Heart right ventricle (tissue), 16 donors: ENCODE measurements at regions of chr16 and their contacts with region 1.

Region 1: DNA sequence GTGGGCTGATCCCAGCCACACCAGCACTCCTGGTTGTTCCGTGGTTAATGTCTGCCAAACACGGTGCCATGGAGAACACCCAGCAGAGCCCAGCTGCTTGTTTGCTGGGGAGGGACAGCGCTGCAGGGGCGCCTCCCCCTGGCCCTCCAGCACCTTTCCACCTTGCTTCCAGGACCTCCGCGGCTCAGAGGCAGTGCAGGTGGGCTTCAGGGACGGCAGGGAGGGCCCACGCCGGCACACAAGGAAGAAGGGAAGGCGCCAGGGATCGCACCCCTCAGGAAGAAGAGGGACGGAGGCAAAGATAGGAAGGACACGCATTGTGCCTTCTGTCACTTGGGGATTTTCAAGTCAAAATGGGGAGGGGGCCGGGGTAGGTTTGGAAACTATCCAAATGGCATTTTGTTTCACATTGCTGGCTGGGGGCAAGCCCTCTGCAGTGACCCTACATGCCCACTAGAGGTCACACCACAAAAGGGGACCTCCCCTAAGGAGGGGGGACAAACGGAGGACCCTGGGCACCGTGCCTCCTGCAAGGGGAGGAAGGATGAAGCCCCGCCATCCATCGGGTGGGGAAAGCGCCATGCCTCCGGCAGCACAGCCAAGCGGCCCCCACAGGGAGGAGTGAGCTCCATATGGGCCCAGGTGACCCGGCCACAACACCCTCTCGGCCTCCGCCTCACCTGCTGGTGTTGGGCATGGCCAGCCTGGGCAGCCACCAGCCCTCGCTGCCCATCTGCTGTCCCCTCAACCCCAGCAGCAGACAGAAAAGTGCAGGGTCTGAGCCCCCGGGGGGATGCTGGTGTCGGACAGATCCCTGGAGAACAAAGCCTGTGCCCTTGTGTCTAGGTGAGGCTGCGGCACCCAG is 7.5 kb upstream of the C16orf95 start:
- DNase-seq: peak in 1 of 2 donors; percentile 38
- ATAC-seq: peak; percentile 48 to 75 (median 60)
- H3K4me3 ChIP-seq: no peak overlapping the region
- H3K27ac ChIP-seq: no peak overlapping the region
- H3K4me1 ChIP-seq: peaks cover 0 to 21% (median 5%) of the 10 kb centered on the region in 9 donors
- H3K27me3 ChIP-seq: no peaks in the 10 kb centered on the region
- CTCF ChIP-seq: peak; percentile 75 to 92 (median 81)

Region 2: GRCh38 chr16:87368029-87368770 is 43.6 kb after region 1 on chr16:
- intact Hi-C with region 1: loop called in 1 of 10 experiments (anchors 5 kb)
- DNase-seq: no peak
- ATAC-seq: peak in 3 of 8 donors; percentile 31 to 61 (median 46)
- H3K4me3 ChIP-seq: no peak overlapping the region
- H3K27ac ChIP-seq: peak overlapping the region in 8 of 10 donors; percentile 4 to 56 (median 43)
- H3K4me1 ChIP-seq: peaks cover 18 to 82% (median 68%) of the 10 kb centered on the region in 9 donors
- H3K27me3 ChIP-seq: peaks cover 0 to 70% (median 0%) of the 10 kb centered on the region in 7 donors
- CTCF ChIP-seq: no peak

Region 3: GRCh38 chr16:87380859-87381258 is 56.2 kb after region 1 on chr16:
- intact Hi-C with region 1: loop called in 9 of 10 experiments (anchors 2 to 5 kb)
- DNase-seq: no peak
- ATAC-seq: no peak
- H3K4me3 ChIP-seq: peak overlapping the region in 7 of 10 donors; percentile 61 to 81 (median 68)
- H3K27ac ChIP-seq: peak overlapping the region in 9 of 10 donors; percentile 42 to 92 (median 83)
- H3K4me1 ChIP-seq: peaks cover 7 to 72% (median 56%) of the 10 kb centered on the region in 9 donors
- H3K27me3 ChIP-seq: no peaks in the 10 kb centered on the region
- CTCF ChIP-seq: no peak

Region 4: DNA sequence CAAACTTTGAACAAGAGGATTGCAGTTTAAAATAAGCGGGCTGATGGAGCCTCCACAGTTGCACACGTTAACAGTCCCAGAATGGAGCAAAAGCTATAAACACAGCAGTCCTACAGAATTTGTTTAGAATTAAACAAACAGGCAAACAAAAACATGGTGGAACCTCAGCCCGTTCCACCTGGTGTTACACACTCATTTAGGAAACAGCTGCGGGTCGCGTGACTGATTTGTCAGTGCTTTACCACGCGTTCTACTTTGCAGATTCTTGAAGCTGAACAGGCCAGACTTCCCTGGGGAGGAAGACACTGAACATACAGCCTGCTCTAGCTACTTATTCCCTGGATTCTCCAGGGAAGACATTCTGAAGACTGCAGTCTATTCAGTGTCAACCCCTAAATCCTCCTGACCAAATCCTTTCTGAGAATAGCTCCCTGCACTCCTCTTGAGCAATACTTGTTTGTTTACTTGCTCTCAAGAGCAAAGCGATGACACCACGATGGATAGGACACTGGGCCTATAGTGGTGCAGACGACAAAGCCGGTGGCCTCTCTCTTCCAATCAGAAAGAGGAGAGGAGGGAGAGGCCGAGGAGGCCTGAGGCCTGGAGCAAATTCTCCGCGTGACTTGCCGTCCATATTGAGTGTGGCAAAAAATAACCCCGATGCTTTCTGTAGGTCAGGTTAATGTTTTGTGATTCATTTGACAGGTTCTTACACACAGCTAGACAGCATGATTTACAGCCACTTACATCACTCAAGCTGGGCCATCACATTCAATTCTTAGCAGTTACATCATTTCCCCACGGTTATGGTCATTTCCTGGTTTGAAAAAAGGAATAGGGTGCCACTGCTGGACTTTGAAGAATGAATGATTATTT is 63.5 kb after region 1 on chr16:
- intact Hi-C with region 1: loop called in 9 of 10 experiments (anchors 5 kb)
- DNase-seq: peak; percentile 82 to 97
- ATAC-seq: peak; percentile 59 to 85 (median 74)
- H3K4me3 ChIP-seq: peak overlapping the region in 7 of 10 donors; percentile 23 to 41 (median 29)
- H3K27ac ChIP-seq: peak overlapping the region; percentile 83 to 95 (median 88)
- H3K4me1 ChIP-seq: peaks cover 10 to 45% (median 41%) of the 10 kb centered on the region in 9 donors
- H3K27me3 ChIP-seq: no peaks in the 10 kb centered on the region
- CTCF ChIP-seq: no peak

Region 5: DNA sequence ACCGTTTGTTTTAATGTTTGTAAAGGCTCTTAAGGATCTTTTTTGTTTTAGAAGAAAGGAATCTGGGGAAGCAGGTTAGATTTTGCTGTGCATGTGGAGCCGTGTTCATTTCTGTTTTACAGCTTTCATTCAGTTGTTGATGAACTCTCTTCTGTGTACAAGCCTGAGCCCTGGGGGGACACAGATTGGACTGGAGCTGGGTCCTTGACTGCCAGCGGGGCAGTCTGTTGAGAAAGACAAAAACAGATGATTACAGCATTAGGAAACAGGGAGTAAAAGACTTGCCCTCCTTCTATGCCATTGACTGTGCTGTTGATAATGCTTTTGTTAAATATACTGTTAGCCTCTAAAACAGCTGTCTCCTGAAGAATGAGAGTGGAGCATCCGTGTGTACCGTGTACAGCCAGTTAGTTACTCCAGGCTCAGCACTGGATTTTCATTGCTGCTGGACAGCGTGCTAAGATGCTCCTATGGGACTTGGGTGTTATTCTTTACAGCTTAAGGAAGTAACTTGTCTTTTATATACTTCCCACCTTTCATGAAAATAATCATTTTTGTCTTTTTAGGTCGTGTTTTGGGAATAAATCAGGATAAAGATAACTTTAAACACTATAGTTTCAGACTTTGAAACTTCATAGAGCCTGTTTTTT is 70.7 kb after region 1 on chr16:
- intact Hi-C with region 1: loop called in 5 of 10 experiments (anchors 5 kb)
- DNase-seq: no peak
- ATAC-seq: no peak
- H3K4me3 ChIP-seq: no peak overlapping the region
- H3K27ac ChIP-seq: no peak overlapping the region
- H3K4me1 ChIP-seq: peaks cover 10 to 54% (median 34%) of the 10 kb centered on the region in 9 donors
- H3K27me3 ChIP-seq: no peaks in the 10 kb centered on the region
- CTCF ChIP-seq: no peak